Activated naive CD4-positive, alpha-beta T cell treated with anti-CD3 and anti-CD28 coated beads for 36 hours (primary cell): ENCODE measurements at regions of chr11 and their contacts with region 1.

Region 1: GRCh38 chr11:78798660-78799059 is 224.0 kb upstream of the NARS2 start:
- DNase-seq: peak; percentile 62
- H3K4me3 Mint-ChIP-seq: no peak overlapping the region
- H3K27ac Mint-ChIP-seq: no peak overlapping the region
- H3K4me1 Mint-ChIP-seq: no peaks in the 10 kb centered on the region
- H3K27me3 Mint-ChIP-seq: no peaks in the 10 kb centered on the region

Region 2: DNA sequence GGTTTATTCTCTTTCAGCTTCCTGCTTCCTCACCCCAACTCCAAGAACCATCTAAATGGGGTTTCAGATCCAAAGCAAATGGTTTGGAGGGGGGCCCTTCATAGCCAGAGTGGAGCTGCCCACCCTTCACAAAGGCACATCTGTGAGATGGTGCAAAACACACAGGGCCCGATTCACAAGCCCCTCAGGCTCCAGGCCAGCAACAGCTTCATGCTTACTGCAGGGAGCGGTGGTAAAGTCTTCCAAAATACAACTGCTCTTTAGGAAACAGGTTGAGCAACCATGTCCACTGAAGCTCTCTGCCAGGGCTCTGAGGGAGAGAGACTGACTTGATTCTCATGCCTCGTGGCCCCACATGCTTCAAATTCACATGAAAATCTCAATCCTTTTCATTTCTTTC is 11.0 kb before region 1 on chr11:
- CTCF ChIA-PET with region 1: interaction called, 13 read pairs
- intact Hi-C with region 1: no loop called
- DNase-seq: no peak
- H3K4me3 Mint-ChIP-seq: no peak overlapping the region
- H3K27ac Mint-ChIP-seq: no peak overlapping the region
- H3K4me1 Mint-ChIP-seq: no peaks in the 10 kb centered on the region
- H3K27me3 Mint-ChIP-seq: peaks cover 6% of the 10 kb centered on the region

Region 3: DNA sequence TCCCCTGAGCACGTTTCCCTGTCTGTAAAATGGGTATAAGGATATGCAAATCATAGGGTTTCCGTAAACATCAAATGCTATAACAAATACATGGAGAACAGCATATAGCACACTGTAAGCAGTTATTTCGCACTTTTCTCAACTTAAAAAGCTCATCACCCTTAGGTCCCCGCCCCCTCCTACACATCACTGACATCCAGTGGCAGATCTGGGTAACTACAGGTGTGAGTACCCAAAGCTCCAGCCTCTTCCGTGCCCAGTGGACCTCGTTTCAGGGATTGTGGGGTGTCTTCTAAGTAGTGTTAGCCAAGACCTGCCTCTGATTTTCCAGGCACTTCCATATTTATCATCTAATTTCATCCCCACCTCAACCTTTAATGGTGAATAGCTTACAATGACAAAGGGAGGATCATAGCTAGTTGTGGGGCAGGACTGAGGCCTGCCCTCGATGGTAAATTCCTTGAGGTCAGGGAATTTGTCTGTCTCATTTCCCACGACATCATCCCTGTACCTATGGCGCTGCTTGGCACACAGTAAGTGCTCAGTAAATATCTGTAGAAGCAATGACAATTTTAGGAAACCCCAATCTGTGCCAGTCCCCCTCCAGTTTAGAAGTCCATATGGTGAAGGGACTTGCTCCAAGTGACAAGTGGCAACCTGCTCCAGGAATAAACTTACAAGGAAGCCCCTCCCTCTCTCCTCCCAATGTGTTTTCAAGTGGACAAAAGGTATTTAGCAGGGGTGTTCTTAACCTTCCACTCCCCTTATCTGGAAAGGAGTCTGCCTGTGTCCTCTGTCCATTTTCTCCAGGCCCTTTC is 301.6 kb after region 1 on chr11:
- CTCF ChIA-PET with region 1: interaction called, 5 read pairs
- intact Hi-C with region 1: loop called (anchors 1 kb)
- DNase-seq: peak; percentile 58
- H3K4me3 Mint-ChIP-seq: no peak overlapping the region
- H3K27ac Mint-ChIP-seq: no peak overlapping the region
- H3K4me1 Mint-ChIP-seq: no peaks in the 10 kb centered on the region
- H3K27me3 Mint-ChIP-seq: peaks cover 20% of the 10 kb centered on the region